GM13976 (cell line): ENCODE measurements at regions of chr15 and their contacts with region 1.

Region 1: DNA sequence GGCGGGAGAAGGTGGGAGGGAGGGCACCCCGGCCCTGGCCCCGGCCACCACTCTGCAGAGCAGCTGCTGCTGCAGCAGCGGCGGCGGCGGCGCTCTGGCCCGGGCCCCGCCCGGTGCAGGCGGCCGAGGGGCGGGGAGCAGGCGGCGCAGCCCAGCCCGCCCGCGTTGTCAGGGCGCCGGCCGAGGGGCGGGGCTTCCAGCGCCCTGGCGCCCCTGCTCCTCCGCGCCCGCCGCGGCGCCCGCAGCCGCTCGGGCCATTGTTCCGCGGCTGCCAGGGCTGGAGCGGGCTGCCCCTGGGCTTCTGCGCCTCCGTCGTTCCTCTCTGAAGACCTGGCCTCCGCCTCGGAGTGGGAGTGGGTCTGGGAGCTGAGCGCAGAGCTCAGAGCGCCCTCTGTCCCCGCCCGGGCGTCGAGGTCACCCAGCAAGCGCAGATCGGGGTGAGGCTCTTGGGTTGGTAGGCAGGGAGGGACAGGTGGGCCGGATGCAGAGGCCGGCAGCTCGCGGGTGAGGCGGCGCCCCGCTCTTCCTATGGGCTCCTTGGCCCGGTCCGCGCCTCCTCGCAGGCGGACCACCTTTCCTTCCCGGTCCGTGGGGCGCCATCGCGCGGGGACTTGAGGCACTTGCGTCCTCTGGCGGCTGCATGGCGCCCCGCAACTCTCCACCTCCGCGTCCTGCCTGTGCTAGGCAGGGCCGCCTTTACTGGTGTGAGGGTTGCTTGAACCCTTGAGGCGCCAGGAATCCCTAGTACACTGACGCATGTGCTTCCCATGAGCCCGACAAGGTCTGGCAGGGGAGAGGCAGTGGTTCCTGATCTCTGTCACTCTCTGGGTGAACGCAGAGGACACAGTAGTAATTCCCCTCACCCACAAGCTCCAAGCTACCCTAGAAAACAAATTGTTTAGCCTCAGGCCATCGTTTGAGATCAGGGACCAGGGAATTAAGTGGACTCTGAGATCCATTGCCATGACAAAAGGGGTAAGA is at the start of gene LPCAT4:
- DNase-seq: peak; percentile 97
- CTCF ChIP-seq: peak; percentile 93

Region 2: GRCh38 chr15:34055853-34056595 is 311.4 kb before region 1 on chr15:
- in situ Hi-C with region 1: loop called (anchors 25 kb)
- DNase-seq: no peak
- CTCF ChIP-seq: no peak

Region 3: GRCh38 chr15:34132881-34133280 is 234.5 kb before region 1 on chr15:
- in situ Hi-C with region 1: no loop called
- DNase-seq: no peak
- CTCF ChIP-seq: no peak

Region 4: GRCh38 chr15:34304613-34305012 is 62.8 kb before region 1 on chr15:
- in situ Hi-C with region 1: no loop called
- DNase-seq: no peak
- CTCF ChIP-seq: no peak

Region 5: GRCh38 chr15:34496207-34496995 is 129.0 kb after region 1 on chr15:
- in situ Hi-C with region 1: no loop called
- DNase-seq: no peak
- CTCF ChIP-seq: no peak

Region 6: DNA sequence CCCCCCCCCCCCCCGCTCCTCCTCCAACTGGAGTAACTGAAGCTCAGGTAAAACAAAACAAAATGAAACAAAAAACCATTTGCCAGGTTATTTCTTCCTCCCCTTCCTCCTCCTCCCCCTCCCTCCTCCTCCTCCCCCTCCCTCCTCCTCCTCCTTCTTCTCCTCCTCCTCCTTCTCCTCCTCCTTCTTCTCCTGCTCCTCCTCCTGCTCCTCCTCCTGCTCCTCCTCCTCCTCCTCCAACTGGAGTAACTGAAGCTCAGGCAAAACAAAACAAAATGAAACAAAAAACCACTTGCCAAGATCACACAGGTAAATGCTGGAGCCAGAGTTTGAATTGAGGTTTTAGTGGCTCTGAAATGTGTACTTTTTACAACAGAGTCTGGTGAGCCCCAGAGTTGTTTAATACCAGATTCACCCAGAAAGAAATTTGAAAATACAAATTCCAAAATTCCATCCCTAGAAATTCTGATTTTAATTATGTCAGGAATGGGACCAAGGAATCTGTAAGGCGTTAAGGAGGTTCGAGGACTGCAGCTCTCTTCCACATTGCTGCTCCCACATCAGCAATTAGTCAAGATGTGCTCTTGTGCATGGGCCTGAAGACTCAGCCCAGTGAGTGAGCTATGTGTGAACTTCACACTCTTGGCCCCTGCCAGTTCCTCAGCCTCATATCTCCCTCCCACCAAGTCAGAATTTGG is 652.1 kb after region 1 on chr15:
- in situ Hi-C with region 1: no loop called
- DNase-seq: no peak
- CTCF ChIP-seq: no peak